Left ventricle myocardium inferior (tissue), 1 donor: ENCODE measurements at regions of chr9 and their contacts with region 1.

Region 1: GRCh38 chr9:10208691-10209069 is 404.1 kb downstream of the PTPRD start:
- DNase-seq: no peak
- H3K4me3 ChIP-seq: peak overlapping the region; percentile 60
- H3K27ac ChIP-seq: no peak overlapping the region
- H3K4me1 ChIP-seq: no peaks in the 10 kb centered on the region
- H3K27me3 ChIP-seq: no peaks in the 10 kb centered on the region
- CTCF ChIP-seq: no peak

Region 2: DNA sequence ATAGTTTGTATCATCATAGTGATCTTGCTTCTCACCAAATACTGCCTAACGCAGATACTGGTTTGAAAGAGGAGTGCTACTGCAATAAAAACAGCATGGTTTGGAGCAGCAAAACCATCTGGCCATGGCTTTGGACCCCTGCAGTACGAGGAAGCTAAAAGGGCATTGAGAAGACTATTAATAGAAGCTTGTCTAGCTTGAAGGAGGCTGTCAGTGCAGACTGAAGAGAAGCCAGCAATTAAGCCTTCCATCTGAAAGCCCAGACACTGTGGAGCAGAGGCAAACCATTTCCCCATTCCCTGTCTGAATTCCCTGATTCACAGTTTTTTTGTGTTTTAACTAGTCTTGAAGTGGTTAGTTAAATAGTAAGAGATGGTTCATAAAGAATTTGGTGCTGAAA is 122.5 kb after region 1 on chr9:
- intact Hi-C with region 1: loop called (anchors 10 kb)
- DNase-seq: no peak
- H3K4me3 ChIP-seq: no peak overlapping the region
- H3K27ac ChIP-seq: no peak overlapping the region
- H3K4me1 ChIP-seq: no peaks in the 10 kb centered on the region
- H3K27me3 ChIP-seq: no peaks in the 10 kb centered on the region
- CTCF ChIP-seq: no peak